Kidney (tissue), 22 donors: ENCODE measurements at regions of chr1 and their contacts with region 1.

Region 1: DNA sequence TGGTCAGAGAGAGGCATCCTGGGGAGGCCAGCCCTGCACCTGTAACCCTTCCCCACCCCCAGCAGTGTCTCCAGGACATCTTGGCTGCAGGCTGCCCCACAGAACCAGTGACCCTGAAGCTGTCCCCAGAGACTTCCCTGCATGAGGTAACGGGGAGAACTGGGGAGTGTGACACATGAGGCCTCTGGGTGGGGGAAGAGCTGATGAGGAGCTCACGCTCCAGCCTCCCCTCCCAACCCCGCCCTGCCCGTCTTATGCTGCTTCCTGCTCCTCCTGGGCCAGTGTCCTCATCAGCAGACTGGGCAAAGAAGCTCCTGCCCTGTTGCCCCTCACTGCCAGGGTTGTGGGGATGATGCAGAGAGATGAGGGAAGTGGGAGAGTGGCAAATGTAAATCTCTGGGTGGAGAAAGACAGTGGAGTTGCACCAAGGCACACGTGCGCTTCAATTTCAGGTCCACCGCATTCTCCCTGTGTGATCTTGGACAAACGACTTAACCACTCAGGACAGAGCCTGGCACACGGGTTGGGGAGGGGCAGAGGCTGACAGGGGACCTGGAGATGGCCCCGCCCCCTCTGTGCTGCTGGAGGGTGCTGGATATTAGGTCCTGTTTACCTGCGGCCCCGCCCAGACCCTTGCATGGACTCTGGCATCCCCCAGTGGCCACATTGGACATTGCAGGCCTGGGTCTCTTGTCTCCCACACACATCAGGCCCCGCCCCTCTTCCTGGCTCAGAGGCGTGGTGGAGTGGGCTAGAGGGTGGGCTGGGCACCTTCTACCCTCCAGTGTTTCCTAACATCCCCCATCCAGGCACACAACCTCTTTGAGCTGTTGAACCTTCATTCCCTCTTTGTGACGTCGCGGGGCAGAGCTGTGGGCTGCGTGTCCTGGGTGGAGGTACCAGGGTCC is 12.3 kb downstream of the CLCNKB start:
- DNase-seq: peak; percentile 94 to 96 (median 95)
- H3K4me3 ChIP-seq: no peak overlapping the region
- H3K27ac ChIP-seq: no peak overlapping the region
- H3K4me1 ChIP-seq: peaks cover 0 to 2% (median 0%) of the 10 kb centered on the region in 3 donors
- H3K27me3 ChIP-seq: no peaks in the 10 kb centered on the region
- CTCF ChIP-seq: peak; percentile 97

Region 2: DNA sequence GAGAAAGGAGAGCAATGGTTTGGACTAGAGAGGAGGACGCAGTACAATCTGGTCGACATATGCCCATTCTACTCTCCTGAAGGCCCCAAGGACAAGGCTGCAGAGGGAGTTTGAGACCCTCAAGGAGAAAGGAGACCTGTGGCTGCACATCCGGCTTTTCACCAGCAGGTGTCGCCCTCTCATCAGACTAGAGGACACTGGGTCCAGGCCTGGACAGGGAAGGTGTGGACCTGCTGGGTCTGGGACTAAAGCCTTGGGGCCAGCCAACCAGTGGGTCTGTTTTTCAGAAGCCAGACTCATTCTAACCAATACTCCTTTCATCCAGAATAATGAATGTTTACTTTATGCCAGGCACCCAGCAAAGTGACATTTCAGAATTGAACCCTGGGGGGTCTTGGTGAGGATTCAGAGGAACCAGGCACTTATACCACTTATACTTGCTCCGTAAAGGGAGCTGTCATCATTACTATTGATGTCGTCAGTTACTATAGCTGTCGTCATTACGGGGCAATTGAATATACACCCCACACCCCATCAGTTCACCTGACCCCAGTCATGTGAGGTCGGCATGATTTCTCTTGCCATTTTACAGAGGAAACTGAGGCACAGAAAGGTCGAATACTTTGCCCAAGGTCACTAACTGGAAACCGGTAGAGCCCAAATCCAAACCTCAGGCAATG is 46.7 kb before region 1 on chr1:
- intact Hi-C with region 1: loop called (anchors 10 kb)
- DNase-seq: peak; percentile 88 to 92 (median 90)
- H3K4me3 ChIP-seq: no peak overlapping the region
- H3K27ac ChIP-seq: no peak overlapping the region
- H3K4me1 ChIP-seq: peaks cover 0 to 12% (median 10%) of the 10 kb centered on the region in 3 donors
- H3K27me3 ChIP-seq: no peaks in the 10 kb centered on the region
- CTCF ChIP-seq: peak; percentile 98

Region 3: DNA sequence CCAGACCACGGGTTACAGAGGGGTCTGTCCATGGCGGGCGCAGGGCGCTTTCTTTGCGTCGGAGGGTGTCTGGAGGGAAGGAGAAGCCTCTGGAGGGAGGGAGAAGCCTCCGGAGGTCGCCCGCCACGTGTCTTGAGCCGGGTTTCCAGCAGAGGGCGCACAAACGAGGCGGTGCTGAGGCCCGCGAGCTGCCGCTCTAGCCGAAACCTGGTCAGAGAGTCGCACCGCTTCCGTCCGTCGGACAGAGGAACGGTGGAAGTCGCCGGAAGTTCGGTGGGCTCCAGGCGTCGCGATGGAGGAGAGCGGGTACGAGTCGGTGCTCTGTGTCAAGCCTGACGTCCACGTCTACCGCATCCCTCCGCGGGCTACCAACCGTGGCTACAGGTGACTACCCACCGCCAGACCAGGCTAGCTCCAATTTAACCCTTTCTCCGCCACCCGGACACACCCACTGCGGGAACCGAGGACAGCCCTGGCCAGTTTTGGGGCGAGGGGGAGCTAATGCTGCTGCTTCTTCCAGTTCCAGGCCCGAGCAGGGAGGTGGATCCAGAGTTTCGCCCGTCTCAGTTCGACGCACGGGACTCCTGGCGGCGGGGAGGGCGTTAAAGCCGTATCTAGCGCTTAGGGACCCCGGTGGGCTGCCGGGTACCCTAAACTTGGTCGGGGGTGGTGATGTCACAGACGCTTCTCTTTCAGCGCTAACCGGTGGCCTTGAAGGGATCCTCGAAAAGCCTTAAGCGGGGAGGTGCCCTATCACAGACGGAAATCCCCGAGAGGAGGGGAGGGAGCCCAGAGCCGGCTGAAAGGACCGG is 384.8 kb after region 1 on chr1 and contains the start of gene NECAP2:
- intact Hi-C with region 1: no loop called
- DNase-seq: peak; percentile 94 to 97 (median 95)
- H3K4me3 ChIP-seq: peak within 1 kb of the TSS; percentile 91 to 98 (median 98)
- H3K27ac ChIP-seq: peak within 1 kb of the TSS; percentile 38 to 76
- H3K4me1 ChIP-seq: peaks cover 0 to 10% (median 0%) of the 10 kb centered on the region in 3 donors
- H3K27me3 ChIP-seq: no peaks in the 10 kb centered on the region
- CTCF ChIP-seq: peak; percentile 80
- total RNA-seq, gene NECAP2: 57.4 TPM